Psoas muscle (tissue), 8 donors: ENCODE measurements at regions of chr15 and their contacts with region 1.

Region 1: DNA sequence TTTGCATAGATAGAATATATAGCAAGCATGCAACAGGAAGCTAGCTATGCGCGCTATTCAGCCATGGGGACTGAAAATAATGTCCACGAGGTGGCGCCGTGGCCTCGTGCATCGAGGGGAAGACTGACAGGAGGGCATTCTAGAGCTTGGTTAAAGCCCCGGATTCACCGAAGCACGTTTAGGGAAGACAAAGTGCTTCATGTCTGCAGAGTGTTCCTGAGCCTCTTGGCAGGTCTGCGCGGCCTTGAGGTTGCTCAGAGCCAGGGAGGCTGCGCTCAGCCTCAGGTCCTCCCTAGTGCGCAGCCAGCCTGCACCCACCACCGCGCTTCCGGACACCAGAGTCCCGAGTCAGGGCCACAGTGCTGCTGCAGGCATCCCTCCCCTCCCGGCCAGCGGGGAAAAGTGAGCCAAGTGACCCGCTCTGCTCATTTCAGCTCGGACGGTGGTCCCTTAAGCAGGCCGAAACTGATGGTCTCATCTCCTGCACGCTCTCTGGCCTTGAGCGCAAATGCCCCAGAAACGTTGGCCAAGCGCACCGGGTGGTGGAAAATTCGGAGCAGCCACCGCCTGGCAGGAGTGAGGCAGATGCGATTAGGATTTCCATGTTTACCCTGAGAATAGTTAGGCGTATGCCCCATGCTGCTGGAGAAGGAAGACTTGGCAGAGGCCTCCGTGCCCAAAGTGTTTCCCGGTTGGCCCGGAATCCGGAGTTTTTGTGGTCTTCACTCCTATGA is 24.8 kb downstream of the GABRA5 start:
- DNase-seq: no peak
- ATAC-seq: peak in 1 of 4 donors; percentile 42
- H3K4me3 ChIP-seq: no peak overlapping the region
- H3K27ac ChIP-seq: no peak overlapping the region
- H3K4me1 ChIP-seq: no peaks in the 10 kb centered on the region
- H3K27me3 ChIP-seq: peaks cover 0 to 22% (median 6%) of the 10 kb centered on the region in 3 donors
- CTCF ChIP-seq: peak; percentile 32

Region 2: DNA sequence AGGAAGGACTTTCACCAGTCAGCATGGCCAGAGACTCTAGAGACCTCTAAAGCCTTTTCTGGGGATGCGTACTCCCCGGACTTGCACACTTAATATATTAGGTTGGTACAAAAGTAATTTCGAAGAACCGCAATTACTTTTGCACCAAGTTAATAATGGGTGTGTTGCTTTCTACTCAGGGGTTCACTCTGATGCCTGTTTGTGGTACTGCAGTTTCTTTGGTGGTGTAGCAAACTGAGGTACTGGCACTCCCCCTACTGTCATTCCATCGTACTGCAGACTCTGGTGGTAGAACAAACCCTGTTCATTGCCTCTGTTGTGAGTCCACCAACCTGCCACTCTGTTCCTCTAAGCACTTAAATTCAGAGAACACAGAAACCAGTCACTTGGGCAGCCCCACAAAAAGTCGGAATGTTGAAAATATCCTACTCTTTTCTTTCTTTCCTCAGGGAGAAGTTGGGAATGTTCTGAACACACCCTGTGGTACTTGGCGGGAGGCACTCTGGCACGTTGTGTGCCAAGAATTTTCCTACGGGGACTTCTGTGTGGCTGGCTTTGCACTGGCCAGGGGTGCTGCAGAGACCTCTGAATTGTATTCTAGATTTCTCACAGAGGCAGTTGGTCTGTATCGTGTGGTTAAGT is 125.7 kb after region 1 on chr15:
- intact Hi-C with region 1: loop called in 1 of 2 experiments (anchors 10 kb)
- DNase-seq: no peak
- ATAC-seq: no peak
- H3K4me3 ChIP-seq: no peak overlapping the region
- H3K27ac ChIP-seq: no peak overlapping the region
- H3K4me1 ChIP-seq: no peaks in the 10 kb centered on the region
- H3K27me3 ChIP-seq: no peaks in the 10 kb centered on the region
- CTCF ChIP-seq: peak; percentile 34

Region 3: DNA sequence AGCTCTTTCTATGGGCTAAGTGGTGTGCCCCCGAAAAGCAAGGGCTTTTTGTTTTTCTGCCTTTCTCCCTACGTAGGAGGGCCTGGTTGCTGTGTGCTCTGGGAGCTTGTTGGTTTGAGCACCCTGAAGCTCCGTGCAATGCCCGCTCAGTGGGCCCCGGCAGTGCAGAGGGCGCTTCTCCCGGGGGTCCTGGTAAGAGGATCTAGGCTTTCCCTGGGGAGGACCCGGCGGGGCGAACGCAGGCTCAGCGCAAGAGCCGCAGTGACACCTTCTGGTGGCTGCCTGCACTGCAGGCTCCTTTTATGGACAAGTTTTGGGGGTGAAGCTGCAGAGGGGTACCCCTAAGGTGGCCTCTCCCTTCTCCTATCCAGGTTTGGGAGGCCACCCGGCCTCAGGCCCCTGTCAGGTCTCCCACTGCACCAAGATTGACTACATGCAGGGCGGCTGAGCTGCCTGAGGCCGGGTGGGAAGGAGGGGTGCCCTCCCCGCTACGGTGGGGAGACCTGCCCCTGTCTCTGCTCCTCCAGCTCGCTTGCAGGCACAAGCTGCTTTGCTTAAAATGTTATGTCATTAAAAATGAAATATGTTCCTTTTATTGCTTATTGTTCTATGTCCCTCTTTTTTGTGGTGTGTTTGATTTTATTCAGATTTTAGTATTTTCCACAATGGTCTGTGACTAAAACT is 467.3 kb after region 1 on chr15:
- intact Hi-C with region 1: loop called in 1 of 2 experiments (anchors 10 kb)
- DNase-seq: peak in 1 of 2 donors; percentile 18
- ATAC-seq: no peak
- H3K4me3 ChIP-seq: no peak overlapping the region
- H3K27ac ChIP-seq: no peak overlapping the region
- H3K4me1 ChIP-seq: no peaks in the 10 kb centered on the region
- H3K27me3 ChIP-seq: no peaks in the 10 kb centered on the region
- CTCF ChIP-seq: peak; percentile 16